ENCODE measurements at regions of chr15 and their contacts with region 1.

Region 1: DNA sequence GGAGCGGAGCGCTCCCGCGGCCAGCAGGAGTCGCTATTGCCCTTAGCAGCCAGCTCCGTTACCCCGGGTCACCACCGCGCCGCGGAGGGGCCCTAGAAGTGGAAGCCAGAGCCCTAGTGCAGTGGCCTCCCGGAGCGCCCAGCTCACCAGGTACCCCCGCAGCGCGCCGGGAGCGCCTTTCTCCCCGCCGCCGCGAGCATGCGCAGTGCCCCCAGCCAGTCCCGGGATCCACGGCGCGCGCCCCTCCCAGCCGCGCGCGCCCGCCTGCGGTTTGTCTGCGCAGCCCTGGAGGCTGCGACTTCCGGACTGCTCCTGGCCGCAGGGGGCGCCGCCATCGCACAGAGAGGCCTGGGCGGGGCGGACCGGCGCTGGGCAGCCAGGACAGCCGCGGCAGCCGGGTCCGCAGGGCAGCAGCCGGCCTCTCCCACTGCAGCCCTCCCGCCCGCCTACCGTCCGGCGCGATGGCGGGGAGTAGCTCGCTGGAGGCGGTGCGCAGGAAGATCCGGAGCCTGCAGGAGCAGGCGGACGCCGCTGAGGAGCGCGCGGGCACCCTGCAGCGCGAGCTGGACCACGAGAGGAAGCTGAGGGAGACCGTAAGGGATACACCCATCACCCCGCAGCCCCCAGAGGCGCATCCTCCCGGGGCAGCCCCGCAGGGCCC is 5.7 kb downstream of the TPM1 start:
- DNase-seq: peak; percentile 85
- ATAC-seq: peak; percentile 75
- H3K4me3 ChIP-seq: peak overlapping the region; percentile 81
- H3K27ac ChIP-seq: peak overlapping the region; percentile 89
- H3K4me1 ChIP-seq: peaks cover 64% of the 10 kb centered on the region
- H3K27me3 ChIP-seq: no peaks in the 10 kb centered on the region
- CTCF ChIP-seq: peak; percentile 75

Region 2: GRCh38 chr15:62782039-62782791 is 266.0 kb before region 1 on chr15:
- CTCF ChIA-PET with region 1: no interaction called
- POLR2A ChIA-PET with region 1: interaction called, 10 read pairs
- intact Hi-C with region 1: loop called (anchors 5 kb)
- DNase-seq: peak; percentile 70
- ATAC-seq: peak; percentile 82
- H3K4me3 ChIP-seq: no peak overlapping the region
- H3K27ac ChIP-seq: no peak overlapping the region
- H3K4me1 ChIP-seq: peaks cover 9% of the 10 kb centered on the region; the same call in 1 of the 2 replicates
- H3K27me3 ChIP-seq: no peaks in the 10 kb centered on the region
- CTCF ChIP-seq: peak; percentile 74

Region 3: GRCh38 chr15:62847900-62848489 is 200.2 kb before region 1 on chr15:
- CTCF ChIA-PET with region 1: interaction called, 6 read pairs
- POLR2A ChIA-PET with region 1: interaction called, 16 read pairs
- intact Hi-C with region 1: no loop called
- DNase-seq: peak; percentile 74
- ATAC-seq: peak; percentile 68
- H3K4me3 ChIP-seq: no peak overlapping the region
- H3K27ac ChIP-seq: no peak overlapping the region
- H3K4me1 ChIP-seq: peaks cover 27% of the 10 kb centered on the region
- H3K27me3 ChIP-seq: no peaks in the 10 kb centered on the region
- CTCF ChIP-seq: peak; percentile 85

Region 4: GRCh38 chr15:62896978-62897647 is 151.1 kb before region 1 on chr15:
- CTCF ChIA-PET with region 1: interaction called, 4 read pairs
- POLR2A ChIA-PET with region 1: no interaction called
- intact Hi-C with region 1: loop called (anchors 2 kb)
- DNase-seq: peak; percentile 97
- ATAC-seq: peak; percentile 85
- H3K4me3 ChIP-seq: peak overlapping the region; percentile 43; the same call in 1 of the 2 replicates
- H3K27ac ChIP-seq: peak overlapping the region; percentile 99
- H3K4me1 ChIP-seq: peaks cover 55% of the 10 kb centered on the region
- H3K27me3 ChIP-seq: no peaks in the 10 kb centered on the region
- CTCF ChIP-seq: no peak

Region 5: GRCh38 chr15:63157118-63157843 is 109.0 kb after region 1 on chr15 and contains the start of gene RPS27L:
- CTCF ChIA-PET with region 1: no interaction called
- POLR2A ChIA-PET with region 1: interaction called, 3 read pairs
- intact Hi-C with region 1: loop called (anchors 5 kb)
- DNase-seq: peak; percentile 82
- ATAC-seq: peak; percentile 91
- H3K4me3 ChIP-seq: peak within 1 kb of the TSS; percentile 84
- H3K27ac ChIP-seq: peak within 1 kb of the TSS; percentile 51
- H3K4me1 ChIP-seq: peaks cover 13% of the 10 kb centered on the region
- H3K27me3 ChIP-seq: no peaks in the 10 kb centered on the region
- CTCF ChIP-seq: no peak
- total RNA-seq, gene RPS27L: 33.9 and 48.5 TPM in 2 replicates